ENCODE measurements at regions of chr17 and their contacts with region 1.

Region 1: DNA sequence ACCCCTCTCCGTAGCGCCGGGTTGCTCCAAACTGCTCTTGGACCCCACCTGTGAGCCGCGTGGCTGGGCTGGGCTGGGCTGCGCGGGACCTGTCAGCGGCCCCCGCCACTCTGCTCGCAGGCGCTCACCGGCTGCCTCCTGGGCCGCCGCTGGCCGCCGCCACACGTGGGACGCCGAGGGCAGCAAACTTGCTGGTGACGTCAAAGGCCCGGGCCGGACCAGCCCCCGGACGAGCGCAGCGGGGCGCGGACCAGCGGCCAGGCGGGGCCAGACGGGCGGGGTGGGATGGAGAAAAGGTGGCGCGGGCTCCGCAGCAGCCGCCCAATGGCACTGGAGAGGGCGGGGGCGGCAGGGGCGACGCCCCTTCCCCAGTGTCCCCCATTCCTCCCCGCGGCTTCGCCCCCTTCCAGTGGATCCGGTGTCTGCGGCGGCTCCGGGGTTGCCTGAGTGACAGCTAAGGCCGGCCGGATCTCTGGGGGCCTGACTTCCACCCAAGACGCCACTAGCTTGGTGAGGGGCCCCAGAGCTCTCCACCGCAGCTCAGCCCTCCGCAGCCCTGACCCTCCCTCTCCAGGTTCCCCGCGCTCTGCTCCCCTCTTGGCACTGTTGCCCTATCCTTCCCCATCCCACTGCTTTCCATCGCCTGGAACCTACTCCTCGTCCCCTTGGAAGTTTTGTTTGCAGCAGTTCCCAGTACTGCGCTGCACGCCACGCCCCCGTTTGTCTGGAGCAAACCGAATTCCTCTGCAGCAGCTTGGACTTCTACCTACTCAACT is at the start of gene HS3ST3A1:
- DNase-seq: no peak
- H3K4me3 ChIP-seq: peak within 1 kb of the TSS in 1 of 3 donors; percentile 13
- H3K27ac ChIP-seq: no peak within 1 kb of the TSS
- H3K4me1 ChIP-seq: peaks cover 0 to 18% of the 10 kb centered on the region in 2 donors
- H3K27me3 ChIP-seq: peaks cover 6% of the 10 kb centered on the region
- CTCF ChIP-seq: no peak
- POLR2A ChIP-seq: no peak
- total RNA-seq, gene HS3ST3A1: 0.98 to 2.1 (median 1.8) TPM

Region 2: GRCh38 chr17:14300575-14301278 is 698.8 kb after region 1 on chr17 and contains the start of gene HS3ST3B1:
- intact Hi-C with region 1: loop called (anchors 5 kb)
- DNase-seq: peak; percentile 92 to 96
- H3K4me3 ChIP-seq: peak within 1 kb of the TSS; percentile 19 to 41 (median 39)
- H3K27ac ChIP-seq: peak within 1 kb of the TSS in 2 of 3 donors; percentile 31
- H3K4me1 ChIP-seq: peaks cover 34 to 56% of the 10 kb centered on the region in 2 donors
- H3K27me3 ChIP-seq: peaks cover 43% of the 10 kb centered on the region
- CTCF ChIP-seq: peak in 2 of 6 experiments; percentile 10 to 27
- POLR2A ChIP-seq: peak in 1 of 2 donors; percentile 77
- total RNA-seq, gene HS3ST3B1: 1.2 to 3.9 (median 2.2) TPM

Measured in thyroid gland (tissue), 4 donors.